Esophagus muscularis mucosa (tissue), 4 donors: ENCODE measurements at regions of chr11 and their contacts with region 1.

Region 1: GRCh38 chr11:120178561-120179056 is 32.2 kb upstream of the OAF start:
- DNase-seq: peak; percentile 66
- H3K4me3 ChIP-seq: no peak overlapping the region
- H3K27ac ChIP-seq: peak overlapping the region in 3 of 4 donors; percentile 2 to 64 (median 19)
- H3K4me1 ChIP-seq: peaks cover 36 to 55% (median 51%) of the 10 kb centered on the region in 4 donors
- H3K27me3 ChIP-seq: peaks cover 0 to under 1% (median 0%) of the 10 kb centered on the region in 4 donors
- CTCF ChIP-seq: no peak
- EP300 ChIP-seq: no peak
- POLR2A ChIP-seq: no peak

Region 2: DNA sequence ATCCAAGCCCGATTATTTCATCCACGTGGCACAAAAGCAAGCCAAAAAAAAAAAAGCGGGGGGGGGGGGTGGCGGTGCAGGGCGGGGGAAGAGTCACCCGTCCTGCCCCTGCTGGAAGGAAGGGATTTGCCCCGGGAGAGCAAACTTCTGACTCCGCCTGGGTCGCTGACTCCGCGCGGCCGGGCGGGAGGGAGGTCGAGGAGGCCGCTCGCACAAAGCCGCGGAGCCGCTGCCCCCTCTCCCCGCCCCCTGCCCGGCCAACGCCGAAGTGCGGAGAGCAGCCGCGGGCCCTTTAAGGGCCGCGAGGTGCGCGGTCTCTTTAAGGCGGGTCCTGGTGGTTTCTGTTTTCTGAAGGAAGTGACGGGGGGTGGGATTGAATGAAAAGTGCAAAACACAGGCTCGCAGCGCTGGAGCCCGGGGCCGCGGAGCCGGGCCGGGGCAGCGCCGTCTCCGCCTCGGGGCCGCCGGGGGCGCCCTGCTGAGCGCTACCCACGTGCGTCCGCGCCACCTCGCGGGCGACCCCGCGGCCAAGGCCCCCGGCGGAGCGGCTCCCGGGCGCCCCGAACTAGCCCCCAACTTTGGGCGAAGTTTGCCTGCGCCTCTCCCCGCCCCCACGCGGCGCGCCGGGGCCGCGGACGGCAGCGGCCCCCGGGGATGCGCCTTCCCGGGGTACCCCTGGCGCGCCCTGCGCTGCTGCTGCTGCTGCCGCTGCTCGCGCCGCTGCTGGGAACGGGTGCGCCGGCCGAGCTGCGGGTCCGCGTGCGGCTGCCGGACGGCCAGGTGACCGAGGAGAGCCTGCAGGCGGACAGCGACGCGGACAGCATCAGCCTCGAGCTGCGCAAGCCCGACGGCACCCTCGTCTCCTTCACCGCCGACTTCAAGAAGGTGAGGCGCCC is 32.3 kb after region 1 on chr11 and contains the start of gene OAF:
- intact Hi-C with region 1: loop called (anchors 5 kb)
- DNase-seq: no peak
- H3K4me3 ChIP-seq: peak within 1 kb of the TSS; percentile 71 to 91 (median 76)
- H3K27ac ChIP-seq: peak within 1 kb of the TSS; percentile 80 to 84 (median 80)
- H3K4me1 ChIP-seq: peaks cover 28 to 76% (median 68%) of the 10 kb centered on the region in 4 donors
- H3K27me3 ChIP-seq: no peaks in the 10 kb centered on the region
- CTCF ChIP-seq: peak in 2 of 3 experiments; percentile 23 to 30
- EP300 ChIP-seq: no peak
- POLR2A ChIP-seq: no peak
- total RNA-seq, gene OAF: 30.7 to 66.1 (median 58.1) TPM

Region 3: GRCh38 chr11:120285256-120285655 is 106.6 kb after region 1 on chr11:
- intact Hi-C with region 1: no loop called
- DNase-seq: no peak
- H3K4me3 ChIP-seq: no peak overlapping the region
- H3K27ac ChIP-seq: no peak overlapping the region
- H3K4me1 ChIP-seq: no peaks in the 10 kb centered on the region
- H3K27me3 ChIP-seq: peaks cover 0 to 5% (median 2%) of the 10 kb centered on the region in 4 donors
- CTCF ChIP-seq: no peak
- EP300 ChIP-seq: no peak
- POLR2A ChIP-seq: no peak